ENCODE measurements at regions of chr12 and their contacts with region 1.

Region 1: GRCh38 chr12:11486623-11487444 is 91.5 kb upstream of the PRB2 start:
- DNase-seq: peak; percentile 79
- H3K4me3 ChIP-seq: no peak overlapping the region
- H3K27ac ChIP-seq: no peak overlapping the region
- H3K4me1 ChIP-seq: no peaks in the 10 kb centered on the region
- H3K27me3 ChIP-seq: no peaks in the 10 kb centered on the region
- CTCF ChIP-seq: peak; percentile 93

Region 2: DNA sequence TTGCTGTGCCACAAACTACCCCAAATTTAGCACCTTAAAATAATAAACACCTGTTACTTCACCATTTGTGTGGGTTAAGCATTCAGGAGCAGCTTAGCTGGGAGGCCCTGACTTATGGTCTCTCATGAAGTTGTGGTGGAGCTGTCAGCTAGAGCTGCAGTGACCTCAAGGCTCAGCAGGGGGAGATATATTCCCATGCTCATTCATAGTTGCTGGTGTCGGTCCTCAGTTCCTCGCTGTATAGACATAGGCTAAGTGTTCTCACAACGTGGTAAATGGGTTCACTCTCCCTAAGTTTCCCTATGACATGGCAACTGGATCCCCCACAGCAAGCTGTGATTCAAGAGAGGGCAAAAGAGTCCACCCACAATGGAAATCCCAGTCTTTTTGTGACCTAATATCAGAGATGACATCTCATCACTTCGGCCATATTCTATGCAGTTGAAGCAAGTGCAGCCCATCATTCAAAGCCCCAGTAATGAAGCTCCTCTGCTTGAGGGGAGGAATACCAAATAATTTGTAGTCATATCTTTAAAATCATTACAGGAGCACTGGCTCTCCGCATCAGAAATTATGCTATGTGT is 258.4 kb before region 1 on chr12:
- intact Hi-C with region 1: loop called (anchors 5 kb)
- DNase-seq: peak; percentile 33
- H3K4me3 ChIP-seq: no peak overlapping the region
- H3K27ac ChIP-seq: no peak overlapping the region
- H3K4me1 ChIP-seq: no peaks in the 10 kb centered on the region
- H3K27me3 ChIP-seq: no peaks in the 10 kb centered on the region
- CTCF ChIP-seq: peak; percentile 53

Region 3: GRCh38 chr12:11595080-11595479 is 108.2 kb after region 1 on chr12:
- intact Hi-C with region 1: no loop called
- DNase-seq: no peak
- H3K4me3 ChIP-seq: no peak overlapping the region
- H3K27ac ChIP-seq: no peak overlapping the region
- H3K4me1 ChIP-seq: no peaks in the 10 kb centered on the region
- H3K27me3 ChIP-seq: no peaks in the 10 kb centered on the region
- CTCF ChIP-seq: no peak